AG04450 (cell line): ENCODE measurements at regions of chr3 and their contacts with region 1.

Region 1: GRCh38 chr3:65672871-65673815 is 365.6 kb downstream of the MAGI1 start:
- DNase-seq: peak; percentile 1
- H3K4me3 ChIP-seq: no peak overlapping the region
- H3K27ac ChIP-seq: no peak overlapping the region
- H3K27me3 ChIP-seq: no peaks in the 10 kb centered on the region
- CTCF ChIP-seq: peak; percentile 75

Region 2: DNA sequence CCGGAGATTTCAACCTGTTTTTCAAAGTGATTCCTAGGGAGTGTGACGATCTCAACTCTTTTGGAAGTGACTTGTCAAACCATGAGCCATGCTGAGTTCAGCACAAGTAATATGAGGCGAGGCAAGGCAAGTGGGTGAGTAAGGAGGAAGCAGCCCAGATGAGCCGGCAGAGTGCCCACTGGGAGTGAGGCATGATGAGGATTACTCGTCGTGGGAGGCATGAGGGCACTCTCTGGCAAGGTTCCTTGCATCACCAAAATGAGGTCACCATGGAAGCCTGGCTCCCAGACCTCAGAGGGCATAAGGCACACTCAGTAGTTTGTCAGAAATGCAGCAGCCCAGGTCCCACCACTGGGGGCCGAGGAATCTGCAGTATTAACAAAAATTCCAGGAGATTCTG is 270.5 kb before region 1 on chr3:
- CTCF ChIA-PET with region 1: no interaction called
- POLR2A ChIA-PET with region 1: no interaction called
- DNase-seq: peak; percentile 63
- H3K4me3 ChIP-seq: no peak overlapping the region
- H3K27ac ChIP-seq: no peak overlapping the region
- H3K27me3 ChIP-seq: no peaks in the 10 kb centered on the region
- CTCF ChIP-seq: 0 out of 2 replicates have a peak, but pooled peaks have one; percentile 3

Region 3: GRCh38 chr3:65524584-65524983 is 148.6 kb before region 1 on chr3:
- CTCF ChIA-PET with region 1: no interaction called
- POLR2A ChIA-PET with region 1: no interaction called
- DNase-seq: no peak
- H3K4me3 ChIP-seq: no peak overlapping the region
- H3K27ac ChIP-seq: no peak overlapping the region
- H3K27me3 ChIP-seq: no peaks in the 10 kb centered on the region
- CTCF ChIP-seq: no peak

Region 4: DNA sequence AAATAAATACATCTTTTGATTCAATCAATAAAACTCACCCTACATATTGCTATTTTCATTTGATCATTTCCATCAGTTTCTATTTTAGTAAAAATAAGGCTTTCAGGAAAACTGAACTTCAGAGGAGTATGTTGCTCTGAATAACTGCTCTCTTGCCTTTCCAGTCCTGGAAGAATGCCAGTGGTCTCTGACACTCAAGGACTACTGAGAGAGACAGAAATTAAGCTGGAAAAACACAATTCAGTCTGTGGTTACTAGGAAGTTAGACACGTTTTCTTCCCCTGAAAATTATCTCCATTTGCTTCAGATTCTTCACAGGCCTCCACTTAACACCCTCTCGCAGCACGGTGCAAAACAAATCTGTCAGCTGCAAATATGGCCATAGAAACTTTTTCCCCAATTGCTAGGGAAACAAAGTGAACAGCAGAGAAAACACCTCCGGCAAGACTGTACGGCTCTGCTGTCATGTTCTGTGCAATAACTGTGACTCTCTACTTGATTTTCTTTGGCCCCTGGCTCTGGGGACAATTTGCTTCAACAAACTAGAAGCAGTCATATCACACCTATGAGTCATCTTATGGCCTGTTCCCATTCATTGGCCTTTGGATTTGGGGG is 12.6 kb after region 1 on chr3:
- CTCF ChIA-PET with region 1: interaction called, 26 read pairs
- POLR2A ChIA-PET with region 1: no interaction called
- DNase-seq: no peak
- H3K4me3 ChIP-seq: no peak overlapping the region
- H3K27ac ChIP-seq: no peak overlapping the region
- H3K27me3 ChIP-seq: no peaks in the 10 kb centered on the region
- CTCF ChIP-seq: no peak

Region 5: DNA sequence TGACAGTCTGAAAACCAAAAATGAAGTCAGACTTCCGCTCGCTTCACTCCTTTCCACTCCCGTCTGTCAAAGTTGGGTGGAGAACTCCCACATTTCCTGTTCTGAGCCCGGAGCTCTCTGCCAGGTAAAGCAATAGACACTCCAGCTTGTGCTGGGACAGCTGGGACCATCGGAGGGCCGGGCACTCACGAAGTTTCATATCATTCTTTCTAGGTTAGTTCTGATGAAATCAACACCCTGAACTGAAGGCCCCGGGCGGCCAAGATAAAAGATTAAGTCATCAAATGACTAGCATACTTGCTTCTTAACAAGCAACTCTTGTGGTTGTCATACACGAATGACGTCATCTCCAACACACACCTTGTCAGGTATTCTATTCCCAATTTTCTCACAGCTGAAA is 323.4 kb after region 1 on chr3:
- CTCF ChIA-PET with region 1: no interaction called
- POLR2A ChIA-PET with region 1: no interaction called
- DNase-seq: no peak
- H3K4me3 ChIP-seq: no peak overlapping the region
- H3K27ac ChIP-seq: no peak overlapping the region
- H3K27me3 ChIP-seq: no peaks in the 10 kb centered on the region
- CTCF ChIP-seq: no peak